GM23248 (cell line): ENCODE measurements at regions of chr7 and their contacts with region 1.

Region 1: DNA sequence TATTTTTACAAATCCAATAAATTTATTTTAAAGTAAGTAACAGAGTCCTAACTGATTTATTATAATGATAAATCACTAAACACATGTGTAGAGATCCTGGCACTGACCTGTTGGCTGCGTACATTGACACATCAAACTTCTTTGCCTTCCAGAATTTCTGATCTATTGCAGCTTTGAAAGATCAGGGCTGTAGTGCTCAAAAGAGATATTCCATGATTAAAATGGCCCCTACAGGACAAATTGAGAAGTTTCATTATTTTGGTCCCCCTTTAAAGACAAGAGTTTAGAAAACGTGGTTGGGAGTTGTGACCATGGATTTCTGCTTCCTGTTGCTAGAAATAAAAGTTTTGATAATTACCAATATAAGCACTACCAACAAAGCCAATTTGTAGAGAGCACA is 87.7 kb upstream of the PDK4 start:
- DNase-seq: peak; percentile 65
- H3K4me3 ChIP-seq: no peak overlapping the region
- H3K27ac ChIP-seq: no peak overlapping the region
- H3K4me1 ChIP-seq: no peaks in the 10 kb centered on the region
- H3K27me3 ChIP-seq: no peaks in the 10 kb centered on the region

Region 2: GRCh38 chr7:95286096-95286495 is 397.9 kb before region 1 on chr7:
- in situ Hi-C with region 1: no loop called
- DNase-seq: no peak
- H3K4me3 ChIP-seq: no peak overlapping the region
- H3K27ac ChIP-seq: no peak overlapping the region
- H3K4me1 ChIP-seq: no peaks in the 10 kb centered on the region
- H3K27me3 ChIP-seq: peaks cover 22% of the 10 kb centered on the region; the same call in 1 of the 2 replicates

Region 3: GRCh38 chr7:95544171-95544570 is 139.9 kb before region 1 on chr7:
- in situ Hi-C with region 1: loop called (anchors 5 kb)
- DNase-seq: no peak
- H3K4me3 ChIP-seq: no peak overlapping the region
- H3K27ac ChIP-seq: no peak overlapping the region
- H3K4me1 ChIP-seq: peaks cover 5% of the 10 kb centered on the region
- H3K27me3 ChIP-seq: no peaks in the 10 kb centered on the region

Region 4: GRCh38 chr7:95859434-95859833 is 175.4 kb after region 1 on chr7:
- in situ Hi-C with region 1: no loop called
- DNase-seq: peak; percentile 71
- H3K4me3 ChIP-seq: no peak overlapping the region
- H3K27ac ChIP-seq: peak overlapping the region; percentile 27; the same call in 1 of the 2 replicates
- H3K4me1 ChIP-seq: peaks cover 34% of the 10 kb centered on the region
- H3K27me3 ChIP-seq: no peaks in the 10 kb centered on the region